ENCODE measurements at regions of chr17 and their contacts with region 1.

Region 1: GRCh38 chr17:17812211-17813057 is 24.4 kb downstream of the SREBF1 start:
- DNase-seq: no peak
- ATAC-seq: peak; percentile 32
- H3K4me3 ChIP-seq: no peak overlapping the region
- H3K27ac ChIP-seq: peak overlapping the region; percentile 73
- H3K4me1 ChIP-seq: peaks cover 61% of the 10 kb centered on the region
- H3K27me3 ChIP-seq: no peaks in the 10 kb centered on the region
- CTCF ChIP-seq: peak; percentile 97

Region 2: GRCh38 chr17:17289701-17290100 is 522.7 kb before region 1 on chr17:
- CTCF ChIA-PET with region 1: no interaction called
- POLR2A ChIA-PET with region 1: no interaction called
- in situ Hi-C with region 1: no loop called
- intact Hi-C with region 1: no loop called
- DNase-seq: no peak
- ATAC-seq: no peak
- H3K4me3 ChIP-seq: no peak overlapping the region
- H3K27ac ChIP-seq: no peak overlapping the region
- H3K4me1 ChIP-seq: no peaks in the 10 kb centered on the region
- H3K27me3 ChIP-seq: no peaks in the 10 kb centered on the region
- CTCF ChIP-seq: no peak

Region 3: DNA sequence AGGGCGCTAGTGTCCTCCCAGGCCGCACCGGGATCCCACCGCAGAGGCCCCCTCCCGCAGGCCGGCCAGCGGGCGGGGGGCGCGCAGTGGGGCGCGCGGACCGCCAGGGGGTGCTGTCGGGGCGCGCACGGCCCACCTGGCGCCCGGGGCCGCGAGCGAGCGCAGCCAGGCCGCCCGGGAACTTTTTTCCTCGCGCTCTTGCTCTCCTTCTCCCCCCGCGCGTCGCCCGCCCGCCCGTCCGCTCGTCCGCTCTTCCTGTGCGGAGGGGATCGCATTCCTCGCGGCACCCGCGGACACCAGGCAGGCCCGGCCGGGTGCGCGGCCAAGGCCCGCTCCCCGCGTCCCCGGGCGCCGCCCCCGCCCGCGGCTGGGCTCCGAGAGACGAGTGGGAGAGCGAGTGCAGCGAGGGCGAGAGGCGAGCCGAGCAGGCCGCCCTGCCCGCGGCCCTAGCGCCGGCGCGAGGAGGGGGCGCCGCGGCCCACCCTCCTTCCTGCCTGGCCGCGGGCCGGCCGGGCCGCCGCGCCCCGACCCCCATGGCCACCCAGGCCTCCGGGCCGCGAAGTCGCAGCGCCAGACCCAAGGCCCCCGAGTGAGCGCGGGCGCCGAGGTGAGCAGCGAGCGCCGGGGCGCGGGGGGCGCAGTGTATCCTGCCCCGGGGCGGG is 131.1 kb before region 1 on chr17 and contains the start of gene RAI1:
- CTCF ChIA-PET with region 1: no interaction called
- POLR2A ChIA-PET with region 1: interaction called, 10 read pairs
- in situ Hi-C with region 1: no loop called
- intact Hi-C with region 1: no loop called
- DNase-seq: no peak
- ATAC-seq: peak; percentile 65
- H3K4me3 ChIP-seq: peak within 1 kb of the TSS; percentile 63 to 64
- H3K27ac ChIP-seq: peak within 1 kb of the TSS; percentile 97
- H3K4me1 ChIP-seq: peaks cover 35% of the 10 kb centered on the region
- H3K27me3 ChIP-seq: no peaks in the 10 kb centered on the region
- CTCF ChIP-seq: peak; percentile 96
- total RNA-seq, gene RAI1: 51.0 TPM

Region 4: DNA sequence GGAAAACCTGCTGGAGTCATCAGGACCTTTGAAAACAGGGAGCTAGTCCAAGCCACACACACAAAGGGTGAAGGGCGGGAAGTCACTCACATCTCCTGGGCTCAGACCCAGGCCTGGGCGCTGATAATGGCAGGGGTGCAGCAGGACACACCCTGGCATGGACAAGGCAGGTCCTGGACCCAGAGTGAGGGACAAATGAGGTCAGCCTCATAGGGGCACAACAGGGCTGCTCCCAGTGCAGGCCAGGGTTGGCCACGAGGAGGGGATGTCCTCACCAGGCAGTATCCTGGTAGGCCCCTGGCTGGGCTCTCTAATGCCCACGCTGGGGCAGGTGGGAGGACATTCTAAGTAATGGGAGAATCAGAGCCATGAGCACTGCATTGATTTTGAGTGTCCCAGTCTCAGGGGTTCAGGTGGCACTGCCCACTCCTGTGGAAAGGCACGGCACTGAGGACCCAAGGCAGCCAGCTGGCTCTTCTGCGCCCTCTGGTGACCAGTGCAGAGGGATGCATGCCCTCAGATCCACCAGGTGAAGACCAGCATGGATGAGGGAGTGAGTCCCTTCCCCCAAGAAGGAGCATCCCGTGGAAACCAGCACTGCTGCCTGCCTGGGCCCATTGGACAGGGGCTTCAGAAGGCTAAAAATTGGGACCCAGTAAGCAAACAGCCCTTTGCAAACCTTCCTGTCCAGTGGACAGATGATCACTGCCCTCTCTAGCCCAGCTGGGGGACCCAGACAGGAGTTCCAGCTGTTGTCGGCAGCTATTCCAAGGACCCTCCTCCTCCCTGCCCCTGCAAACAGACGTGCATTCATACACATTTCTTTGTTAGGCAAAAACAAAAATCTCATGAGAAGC is 47.7 kb after region 1 on chr17:
- CTCF ChIA-PET with region 1: no interaction called
- POLR2A ChIA-PET with region 1: no interaction called
- in situ Hi-C with region 1: no loop called
- intact Hi-C with region 1: loop called (anchors 5 kb)
- DNase-seq: no peak
- ATAC-seq: peak; percentile 94
- H3K4me3 ChIP-seq: no peak overlapping the region
- H3K27ac ChIP-seq: peak overlapping the region; percentile 34; the same call in 1 of the 2 replicates
- H3K4me1 ChIP-seq: no peaks in the 10 kb centered on the region
- H3K27me3 ChIP-seq: no peaks in the 10 kb centered on the region
- CTCF ChIP-seq: peak; percentile 94